ENCODE measurements at regions of chr6 and their contacts with region 1.

Region 1: GRCh38 chr6:28838634-28839442 is 84.9 kb downstream of the TRIM27 start:
- DNase-seq: peak; percentile 80
- ATAC-seq: peak; percentile 94
- H3K4me3 ChIP-seq: peak overlapping the region; percentile 77 to 94 (median 83)
- H3K27ac ChIP-seq: peak overlapping the region; percentile 16
- H3K4me1 ChIP-seq: peaks cover 11% of the 10 kb centered on the region
- H3K27me3 ChIP-seq: peaks cover 0 to under 1% of the 10 kb centered on the region in 2 experiments; a peak in 2 of 5 replicates
- CTCF ChIP-seq: peak; percentile 95
- EP300 ChIP-seq: no peak
- POLR2A ChIP-seq: no peak
- RAD21 ChIP-seq: no peak; the same call in none of the 2 replicates

Region 2: GRCh38 chr6:28683944-28684538 is 154.8 kb before region 1 on chr6:
- CTCF ChIA-PET with region 1: interaction called, 7 read pairs
- POLR2A ChIA-PET with region 1: no interaction called
- in situ Hi-C with region 1: no loop called
- intact Hi-C with region 1: loop called (anchors 2 kb)
- DNase-seq: peak; percentile 68
- ATAC-seq: peak; percentile 86
- H3K4me3 ChIP-seq: peak overlapping the region in 2 of 3 experiments; percentile 37 to 44; a peak in 3 of 6 replicates
- H3K27ac ChIP-seq: no peak overlapping the region
- H3K4me1 ChIP-seq: peaks cover 34% of the 10 kb centered on the region
- H3K27me3 ChIP-seq: peaks cover 0 to 13% of the 10 kb centered on the region in 2 experiments; a peak in 2 of 5 replicates
- CTCF ChIP-seq: peak; percentile 91
- EP300 ChIP-seq: no peak
- POLR2A ChIP-seq: no peak
- RAD21 ChIP-seq: peak; percentile 72; the same call in 1 of the 2 replicates

Region 3: GRCh38 chr6:28803337-28803709 is 35.5 kb before region 1 on chr6:
- CTCF ChIA-PET with region 1: no interaction called
- POLR2A ChIA-PET with region 1: no interaction called
- in situ Hi-C with region 1: no loop called
- intact Hi-C with region 1: no loop called
- DNase-seq: no peak
- ATAC-seq: peak; percentile 53
- H3K4me3 ChIP-seq: peak overlapping the region; percentile 28 to 49 (median 45)
- H3K27ac ChIP-seq: no peak overlapping the region
- H3K4me1 ChIP-seq: peaks cover 28% of the 10 kb centered on the region
- H3K27me3 ChIP-seq: no peaks in the 10 kb centered on the region; a peak in 1 of 5 replicates
- CTCF ChIP-seq: no peak
- EP300 ChIP-seq: no peak
- POLR2A ChIP-seq: no peak
- RAD21 ChIP-seq: no peak

Region 4: GRCh38 chr6:28863604-28864320 is 24.9 kb after region 1 on chr6:
- CTCF ChIA-PET with region 1: no interaction called
- POLR2A ChIA-PET with region 1: interaction called, 6 read pairs
- in situ Hi-C with region 1: no loop called
- intact Hi-C with region 1: loop called (anchors 2 kb)
- DNase-seq: peak; percentile 72
- ATAC-seq: peak; percentile 47
- H3K4me3 ChIP-seq: peak overlapping the region; percentile 62 to 78 (median 63)
- H3K27ac ChIP-seq: peak overlapping the region; percentile 56
- H3K4me1 ChIP-seq: peaks cover 39% of the 10 kb centered on the region
- H3K27me3 ChIP-seq: peaks cover 0 to 11% of the 10 kb centered on the region in 2 experiments; a peak in 4 of 5 replicates
- CTCF ChIP-seq: no peak; the same call in 1 of the 2 replicates
- EP300 ChIP-seq: no peak
- POLR2A ChIP-seq: 0 out of 4 replicates have a peak, but pooled peaks of 1 of the 2 experiments have one; percentile 31
- RAD21 ChIP-seq: peak; percentile 14; the same call in 1 of the 2 replicates

Region 5: DNA sequence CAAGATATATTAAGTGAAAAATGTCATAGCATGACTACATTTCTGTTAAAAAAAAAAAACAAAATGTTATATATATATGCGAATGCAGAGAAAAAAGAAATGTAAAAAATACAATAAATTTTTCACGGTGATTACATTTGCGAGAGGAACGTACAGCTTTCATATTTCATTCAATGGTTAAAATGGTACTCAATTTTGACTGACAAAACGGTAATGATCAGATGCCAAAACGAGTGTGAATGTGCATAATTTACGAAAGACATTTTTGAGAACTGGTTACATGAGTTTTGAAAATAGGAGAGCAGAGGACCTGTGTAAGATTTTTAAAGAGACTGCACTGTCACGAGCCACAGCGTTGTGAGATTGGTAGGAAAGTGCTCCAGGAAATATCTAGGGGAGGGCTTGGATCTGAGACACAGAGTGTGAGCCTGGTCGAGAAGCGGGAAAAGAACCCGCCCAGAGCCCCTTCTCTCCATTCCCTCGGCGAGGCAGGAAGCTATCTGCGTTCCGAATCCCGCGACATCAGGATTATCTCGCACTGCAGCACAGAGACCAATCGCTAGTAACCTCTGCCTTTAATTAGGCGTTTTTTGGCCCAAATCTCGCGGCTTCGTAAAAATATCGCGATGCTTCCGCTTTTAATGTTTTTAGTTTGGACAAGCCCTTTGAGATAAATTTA is 56.4 kb after region 1 on chr6:
- CTCF ChIA-PET with region 1: no interaction called
- POLR2A ChIA-PET with region 1: interaction called, 16 read pairs
- in situ Hi-C with region 1: no loop called
- intact Hi-C with region 1: loop called (anchors 2 kb)
- DNase-seq: peak; percentile 98
- ATAC-seq: peak; percentile 86
- H3K4me3 ChIP-seq: peak overlapping the region; percentile 82 to 97 (median 86)
- H3K27ac ChIP-seq: peak overlapping the region; percentile 93
- H3K4me1 ChIP-seq: peaks cover 40% of the 10 kb centered on the region
- H3K27me3 ChIP-seq: no peaks in the 10 kb centered on the region; a peak in 1 of 5 replicates
- CTCF ChIP-seq: no peak
- EP300 ChIP-seq: no peak
- POLR2A ChIP-seq: peak; percentile 90 to 95
- RAD21 ChIP-seq: no peak

Region 6: GRCh38 chr6:28981833-28982475 is 143.1 kb after region 1 on chr6:
- CTCF ChIA-PET with region 1: interaction called, 6 read pairs
- POLR2A ChIA-PET with region 1: interaction called, 10 read pairs
- in situ Hi-C with region 1: no loop called
- intact Hi-C with region 1: loop called (anchors 1 kb)
- DNase-seq: peak; percentile 98
- ATAC-seq: peak; percentile 26
- H3K4me3 ChIP-seq: peak overlapping the region; percentile 71 to 97 (median 83)
- H3K27ac ChIP-seq: peak overlapping the region; percentile 98
- H3K4me1 ChIP-seq: peaks cover 62% of the 10 kb centered on the region
- H3K27me3 ChIP-seq: no peaks in the 10 kb centered on the region; a peak in 2 of 5 replicates
- CTCF ChIP-seq: peak; percentile 63
- EP300 ChIP-seq: 0 out of 4 replicates have a peak, but pooled peaks of 1 of the 2 experiments have one; percentile 13
- POLR2A ChIP-seq: no peak
- RAD21 ChIP-seq: peak; percentile 27; the same call in 1 of the 2 replicates

Region 7: DNA sequence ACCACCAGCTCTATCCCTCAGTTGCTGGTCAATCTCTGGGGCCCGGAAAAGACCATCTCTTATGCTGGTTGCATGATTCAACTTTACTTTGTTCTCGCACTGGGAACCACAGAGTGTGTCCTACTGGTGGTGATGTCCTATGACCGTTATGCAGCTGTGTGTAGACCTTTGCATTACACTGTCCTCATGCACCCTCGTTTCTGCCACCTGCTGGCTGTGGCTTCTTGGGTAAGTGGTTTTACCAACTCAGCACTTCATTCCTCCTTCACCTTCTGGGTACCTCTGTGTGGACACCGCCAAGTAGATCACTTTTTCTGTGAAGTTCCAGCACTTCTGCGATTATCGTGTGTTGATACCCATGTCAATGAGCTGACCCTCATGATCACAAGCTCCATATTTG is 273.3 kb after region 1 on chr6:
- CTCF ChIA-PET with region 1: no interaction called
- POLR2A ChIA-PET with region 1: no interaction called
- in situ Hi-C with region 1: no loop called
- intact Hi-C with region 1: loop called (anchors 5 kb)
- DNase-seq: peak; percentile 31
- ATAC-seq: peak; percentile 97
- H3K4me3 ChIP-seq: no peak overlapping the region
- H3K27ac ChIP-seq: no peak overlapping the region
- H3K4me1 ChIP-seq: no peaks in the 10 kb centered on the region
- H3K27me3 ChIP-seq: no peaks in the 10 kb centered on the region
- CTCF ChIP-seq: peak; percentile 50
- EP300 ChIP-seq: no peak
- POLR2A ChIP-seq: no peak
- RAD21 ChIP-seq: no peak